T-cell (primary cell): ENCODE measurements at regions of chr7 and their contacts with region 1.

Region 1: DNA sequence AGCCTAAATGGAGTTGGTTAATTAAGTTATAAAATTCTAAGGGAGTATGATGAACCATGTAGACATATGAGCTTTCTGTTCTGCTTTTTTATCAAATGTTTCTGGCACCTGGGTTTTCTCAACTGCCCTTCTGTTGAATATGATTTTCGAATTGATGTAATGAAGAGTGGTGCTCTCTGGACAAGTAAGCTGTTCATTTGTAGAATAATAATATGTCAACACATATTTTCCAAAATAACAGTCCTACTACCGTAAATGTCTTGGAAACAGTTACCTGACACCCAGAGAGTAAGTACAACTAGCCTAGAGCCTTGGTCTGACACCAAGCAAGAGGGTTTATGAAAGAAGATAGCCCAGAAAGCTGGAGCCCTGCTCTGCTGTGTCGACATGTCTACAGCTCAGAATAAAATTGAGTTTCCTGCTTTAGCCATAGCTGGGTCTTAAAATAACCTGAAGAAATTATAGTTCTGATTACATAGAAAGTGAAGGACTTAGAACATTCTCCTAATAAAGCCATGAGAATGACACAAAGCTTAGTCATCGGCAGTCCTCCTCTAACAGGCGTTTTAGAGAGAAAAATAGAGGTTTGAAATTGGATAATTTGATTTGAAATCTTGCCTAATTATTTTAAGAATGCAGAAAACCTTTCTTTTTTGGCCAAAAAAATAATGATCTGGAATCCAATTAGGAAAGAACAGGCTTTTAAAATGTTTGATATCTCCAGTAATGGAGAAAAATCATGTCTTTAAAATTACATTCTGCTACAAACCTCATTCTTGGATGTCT is 25.1 kb downstream of the HDAC9 start:
- DNase-seq: no peak
- ATAC-seq: no peak
- H3K4me3 ChIP-seq: no peak overlapping the region
- H3K4me3 Mint-ChIP-seq: no peak overlapping the region
- H3K27ac ChIP-seq: no peak overlapping the region
- H3K27ac Mint-ChIP-seq: no peak overlapping the region
- H3K4me1 ChIP-seq: no peaks in the 10 kb centered on the region
- H3K4me1 Mint-ChIP-seq: peaks cover 0 to 5% (median 0%) of the 10 kb centered on the region in 3 donors
- H3K27me3 ChIP-seq: no peaks in the 10 kb centered on the region
- H3K27me3 Mint-ChIP-seq: no peaks in the 10 kb centered on the region

Region 2: DNA sequence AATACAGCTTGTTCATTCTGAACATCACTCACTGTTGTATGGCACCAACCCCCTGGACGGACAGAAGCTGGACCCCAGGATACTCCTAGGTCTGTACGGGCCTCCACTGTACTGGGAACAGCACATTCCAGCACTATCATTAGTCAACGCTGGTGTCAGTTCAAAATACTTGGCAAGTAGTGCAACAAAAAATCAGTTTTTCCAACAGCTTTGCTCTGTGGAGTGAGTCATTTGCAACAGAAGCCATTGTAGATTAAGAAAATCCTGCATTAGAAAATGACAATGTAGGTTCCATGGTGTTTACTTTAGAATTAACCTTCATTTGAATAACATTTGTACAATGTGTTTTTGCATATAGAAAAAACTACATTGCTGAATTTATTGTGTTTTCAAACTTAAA is 241.5 kb after region 1 on chr7:
- CTCF ChIA-PET with region 1: interaction called in 1 of 2 experiments, 13 read pairs
- POLR2A ChIA-PET with region 1: no interaction called
- DNase-seq: no peak
- ATAC-seq: no peak
- H3K4me3 ChIP-seq: no peak overlapping the region
- H3K4me3 Mint-ChIP-seq: no peak overlapping the region
- H3K27ac ChIP-seq: no peak overlapping the region
- H3K27ac Mint-ChIP-seq: no peak overlapping the region
- H3K4me1 ChIP-seq: no peaks in the 10 kb centered on the region
- H3K4me1 Mint-ChIP-seq: no peaks in the 10 kb centered on the region
- H3K27me3 ChIP-seq: no peaks in the 10 kb centered on the region
- H3K27me3 Mint-ChIP-seq: no peaks in the 10 kb centered on the region